ENCODE measurements at regions of chr20 and their contacts with region 1.

Region 1: GRCh38 chr20:24227600-24227999 is 239.0 kb upstream of the GGTLC1 start:
- DNase-seq: no peak
- ATAC-seq: no peak
- H3K4me3 ChIP-seq: no peak overlapping the region
- H3K27ac ChIP-seq: no peak overlapping the region
- H3K4me1 ChIP-seq: no peaks in the 10 kb centered on the region
- H3K27me3 ChIP-seq: peaks cover 0 to 3% (median 0%) of the 10 kb centered on the region in 7 donors
- CTCF ChIP-seq: no peak

Region 2: GRCh38 chr20:23710771-23711170 is 516.8 kb before region 1 on chr20:
- intact Hi-C with region 1: no loop called
- DNase-seq: no peak
- ATAC-seq: no peak
- H3K4me3 ChIP-seq: no peak overlapping the region
- H3K27ac ChIP-seq: no peak overlapping the region
- H3K4me1 ChIP-seq: no peaks in the 10 kb centered on the region
- H3K27me3 ChIP-seq: peaks cover 0 to 10% (median 0%) of the 10 kb centered on the region in 7 donors
- CTCF ChIP-seq: no peak

Region 3: DNA sequence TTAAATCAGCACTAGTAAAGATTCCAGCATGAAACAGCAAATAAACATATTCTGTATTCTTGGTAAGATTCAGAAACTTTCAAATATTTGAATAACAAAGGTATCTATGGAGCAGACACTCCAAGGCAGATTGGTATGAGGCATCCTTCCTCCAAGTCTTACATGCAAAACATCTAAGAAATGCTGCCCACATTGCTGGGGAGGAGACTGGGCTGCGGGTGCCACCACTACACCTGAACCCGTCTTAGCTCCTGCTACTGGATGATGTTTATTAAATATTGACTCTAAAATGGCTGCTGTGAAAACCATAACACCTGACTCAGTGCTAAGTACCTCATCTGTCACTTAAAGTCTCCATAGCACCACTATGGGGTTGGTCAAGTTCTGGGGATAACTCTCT is 50.9 kb before region 1 on chr20:
- intact Hi-C with region 1: loop called in 1 of 10 experiments (anchors 10 kb)
- DNase-seq: no peak
- ATAC-seq: no peak
- H3K4me3 ChIP-seq: no peak overlapping the region
- H3K27ac ChIP-seq: no peak overlapping the region
- H3K4me1 ChIP-seq: no peaks in the 10 kb centered on the region
- H3K27me3 ChIP-seq: peaks cover 0 to 19% (median 0%) of the 10 kb centered on the region in 7 donors
- CTCF ChIP-seq: no peak

Region 4: GRCh38 chr20:24547967-24548366 is 320.4 kb after region 1 on chr20:
- intact Hi-C with region 1: no loop called
- DNase-seq: no peak
- ATAC-seq: no peak
- H3K4me3 ChIP-seq: no peak overlapping the region
- H3K27ac ChIP-seq: no peak overlapping the region
- H3K4me1 ChIP-seq: peaks cover 0 to 11% (median 0%) of the 10 kb centered on the region in 9 donors
- H3K27me3 ChIP-seq: no peaks in the 10 kb centered on the region
- CTCF ChIP-seq: no peak